Heart right ventricle (tissue), 16 donors: ENCODE measurements at regions of chr11 and their contacts with region 1.

Region 1: DNA sequence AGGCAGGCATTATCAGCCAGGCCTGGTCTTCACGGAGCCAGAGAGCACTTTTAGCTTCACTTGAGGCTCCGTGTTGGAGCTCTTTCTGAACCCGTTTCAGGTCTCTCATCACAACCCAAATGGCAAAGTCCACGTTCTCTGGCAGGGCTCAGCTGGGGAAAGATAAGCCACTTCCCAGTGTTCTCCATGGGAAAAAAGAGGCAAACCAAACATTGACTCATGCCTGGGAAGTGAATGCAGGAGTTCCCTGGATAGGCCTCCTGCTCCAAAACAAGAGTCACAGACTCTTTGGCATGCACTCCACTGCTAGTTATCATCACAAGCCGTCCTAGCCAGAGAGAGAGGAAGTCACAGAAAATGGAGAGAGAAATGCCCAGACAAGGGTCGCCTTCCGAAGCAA is 11.6 kb downstream of the OPCML start:
- DNase-seq: peak in 1 of 2 donors; percentile 40
- ATAC-seq: peak; percentile 59 to 86 (median 68)
- H3K4me3 ChIP-seq: no peak overlapping the region
- H3K27ac ChIP-seq: peak overlapping the region in 5 of 10 donors; percentile 9 to 43 (median 23)
- H3K4me1 ChIP-seq: peaks cover 6 to 39% (median 24%) of the 10 kb centered on the region in 9 donors
- H3K27me3 ChIP-seq: peaks cover 0 to 11% (median 0%) of the 10 kb centered on the region in 7 donors
- CTCF ChIP-seq: no peak

Region 2: GRCh38 chr11:133163463-133164419 is 357.0 kb before region 1 on chr11:
- intact Hi-C with region 1: loop called in 1 of 10 experiments (anchors 10 kb)
- DNase-seq: peak in 1 of 2 donors; percentile 24
- ATAC-seq: peak; percentile 63 to 95 (median 78)
- H3K4me3 ChIP-seq: peak overlapping the region in 3 of 10 donors; percentile 2 to 26 (median 16)
- H3K27ac ChIP-seq: peak overlapping the region in 1 of 10 donors; percentile 31
- H3K4me1 ChIP-seq: peaks cover 0 to 7% (median 0%) of the 10 kb centered on the region in 9 donors
- H3K27me3 ChIP-seq: peaks cover 0 to 44% (median 6%) of the 10 kb centered on the region in 7 donors
- CTCF ChIP-seq: peak; percentile 48 to 80 (median 75)

Region 3: DNA sequence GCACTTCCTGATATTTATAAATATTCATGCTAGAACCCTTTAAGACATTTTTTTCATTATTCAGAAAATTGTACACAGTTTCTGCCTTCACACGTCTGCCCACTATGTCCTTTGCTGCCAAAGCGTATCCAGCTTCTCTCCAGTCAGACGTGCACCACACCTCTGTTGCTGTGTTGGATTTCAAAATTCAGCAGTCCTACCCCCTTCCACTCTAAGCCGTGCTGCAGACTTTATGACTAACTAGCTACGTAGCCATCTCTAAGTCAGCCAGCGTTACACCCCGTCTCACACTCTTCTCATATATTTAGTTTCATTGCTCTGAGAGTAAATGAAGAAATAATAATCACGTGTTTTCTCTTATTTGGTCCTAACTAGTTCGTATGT is 39.8 kb after region 1 on chr11:
- intact Hi-C with region 1: no loop called
- DNase-seq: no peak
- ATAC-seq: no peak
- H3K4me3 ChIP-seq: no peak overlapping the region
- H3K27ac ChIP-seq: no peak overlapping the region
- H3K4me1 ChIP-seq: peaks cover 0 to 2% (median 0%) of the 10 kb centered on the region in 9 donors
- H3K27me3 ChIP-seq: peaks cover 0 to 36% (median 8%) of the 10 kb centered on the region in 7 donors
- CTCF ChIP-seq: no peak

Region 4: GRCh38 chr11:133619973-133620372 is 99.3 kb after region 1 on chr11:
- intact Hi-C with region 1: no loop called
- DNase-seq: no peak
- ATAC-seq: peak in 2 of 8 donors; percentile 50 to 59
- H3K4me3 ChIP-seq: no peak overlapping the region
- H3K27ac ChIP-seq: no peak overlapping the region
- H3K4me1 ChIP-seq: no peaks in the 10 kb centered on the region
- H3K27me3 ChIP-seq: peaks cover 0 to 14% (median 0%) of the 10 kb centered on the region in 7 donors
- CTCF ChIP-seq: peak in 7 of 9 donors; percentile 29 to 54 (median 33)

Region 5: DNA sequence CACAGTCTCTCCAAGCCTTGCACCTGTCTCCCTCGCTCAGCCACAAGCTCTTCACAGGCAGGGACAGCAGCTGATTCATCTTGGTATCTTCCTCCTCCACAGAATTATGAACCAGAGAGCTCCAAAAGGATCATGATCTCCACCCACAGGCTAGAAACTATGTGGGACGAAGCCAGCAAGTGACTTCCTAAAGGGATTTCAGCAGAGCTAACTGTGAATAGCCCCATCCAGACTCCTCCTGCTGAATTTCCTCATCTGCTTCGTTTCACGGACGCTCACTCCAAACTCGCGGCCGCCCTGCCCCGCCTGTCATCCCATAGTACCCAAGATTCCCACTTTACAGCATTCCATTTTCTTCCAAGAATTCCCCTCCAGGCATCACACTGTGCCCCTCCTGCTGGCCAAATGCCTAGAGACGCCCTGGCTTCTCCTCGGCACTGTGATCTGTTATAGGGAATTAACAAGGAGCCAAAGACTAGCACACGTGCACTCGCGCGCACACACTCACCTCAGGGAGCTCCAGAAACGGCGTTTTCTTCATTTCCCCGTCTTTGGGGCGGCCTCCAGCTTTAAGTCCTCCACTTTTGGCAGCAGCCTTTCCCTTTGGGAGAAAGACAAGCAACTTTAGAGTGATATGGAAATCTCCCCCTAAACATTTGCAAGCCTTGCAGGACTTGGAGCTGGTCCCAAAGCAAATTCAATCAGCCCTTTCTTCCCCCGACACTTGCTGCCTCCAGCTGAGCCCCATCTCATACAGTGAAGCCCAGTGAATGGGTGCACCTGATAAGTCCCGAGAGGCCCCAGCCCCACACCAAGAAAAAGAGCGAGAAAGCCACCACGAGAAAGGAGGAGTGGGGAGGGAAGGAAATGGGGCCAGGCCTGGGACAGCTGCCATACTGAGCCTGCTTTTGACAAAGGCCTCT is 289.1 kb after region 1 on chr11:
- intact Hi-C with region 1: loop called in 1 of 10 experiments (anchors 10 kb)
- DNase-seq: peak in 1 of 2 donors; percentile 23
- ATAC-seq: peak in 7 of 8 donors; percentile 16 to 79 (median 72)
- H3K4me3 ChIP-seq: no peak overlapping the region
- H3K27ac ChIP-seq: no peak overlapping the region
- H3K4me1 ChIP-seq: peaks cover 0 to 14% (median 0%) of the 10 kb centered on the region in 9 donors
- H3K27me3 ChIP-seq: peaks cover 0 to 49% (median 34%) of the 10 kb centered on the region in 7 donors
- CTCF ChIP-seq: no peak